Calu3 (cell line): ENCODE measurements at regions of chr2 and their contacts with region 1.

Region 1: GRCh38 chr2:184363213-184363612 is 235.1 kb upstream of the ZNF804A start:
- DNase-seq: no peak
- H3K4me3 Mint-ChIP-seq: no peak overlapping the region
- H3K27ac Mint-ChIP-seq: no peak overlapping the region
- H3K4me1 Mint-ChIP-seq: no peaks in the 10 kb centered on the region
- H3K27me3 Mint-ChIP-seq: no peaks in the 10 kb centered on the region
- CTCF ChIP-seq: no peak

Region 2: DNA sequence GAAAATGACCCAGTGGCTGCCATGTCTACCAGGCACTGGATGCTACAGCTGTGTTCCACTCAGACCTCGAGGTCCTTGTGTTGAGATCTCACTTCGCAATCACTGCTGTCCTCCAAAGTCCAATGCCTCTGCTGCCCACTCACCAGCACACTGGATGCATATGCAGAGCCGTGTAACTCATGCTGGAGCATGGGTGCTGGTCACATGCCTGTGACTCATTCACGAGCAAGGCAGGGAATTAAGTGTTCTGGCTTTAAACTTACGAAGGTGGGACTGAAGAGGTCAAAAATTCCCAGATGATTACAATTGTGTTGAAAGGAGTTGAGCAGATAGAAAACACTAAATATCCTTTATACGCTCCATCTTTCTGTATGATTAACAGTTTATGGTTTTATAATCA is 821.4 kb before region 1 on chr2:
- CTCF ChIA-PET with region 1: no interaction called
- intact Hi-C with region 1: no loop called
- DNase-seq: peak; percentile 3
- H3K4me3 Mint-ChIP-seq: no peak overlapping the region
- H3K27ac Mint-ChIP-seq: no peak overlapping the region
- H3K4me1 Mint-ChIP-seq: peaks cover 8% of the 10 kb centered on the region
- H3K27me3 Mint-ChIP-seq: no peaks in the 10 kb centered on the region
- CTCF ChIP-seq: no peak

Region 3: DNA sequence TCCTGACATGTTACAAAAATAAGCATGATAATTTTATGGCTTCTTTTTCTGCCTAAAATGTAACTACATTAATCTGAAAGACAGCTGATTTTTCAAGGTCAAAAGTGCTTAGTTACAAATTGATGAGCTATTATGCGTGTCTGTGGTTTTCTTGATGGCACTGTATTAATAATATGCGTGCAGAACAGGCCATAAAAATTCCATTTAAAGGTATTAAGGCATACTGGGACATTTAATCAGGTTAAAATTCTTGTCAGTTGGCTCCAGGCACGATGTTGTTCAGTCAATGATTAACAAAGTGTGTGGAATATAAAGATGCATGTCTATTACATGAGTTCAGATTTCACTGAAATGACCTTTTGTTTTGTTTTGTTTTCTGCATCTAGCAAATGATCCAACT is 185.0 kb before region 1 on chr2:
- CTCF ChIA-PET with region 1: interaction called, 10 read pairs
- intact Hi-C with region 1: no loop called
- DNase-seq: no peak
- H3K4me3 Mint-ChIP-seq: no peak overlapping the region
- H3K27ac Mint-ChIP-seq: no peak overlapping the region
- H3K4me1 Mint-ChIP-seq: no peaks in the 10 kb centered on the region
- H3K27me3 Mint-ChIP-seq: no peaks in the 10 kb centered on the region
- CTCF ChIP-seq: no peak